Naive thymus-derived CD4-positive, alpha-beta T cell (primary cell): ENCODE measurements at regions of chr14 and their contacts with region 1.

Region 1: GRCh38 chr14:105490572-105491366 is at the start of gene TEDC1:
- DNase-seq: peak; percentile 96 to 100 (median 100)
- ATAC-seq: peak; percentile 75
- H3K4me3 ChIP-seq: peak within 1 kb of the TSS; percentile 85
- H3K4me3 Mint-ChIP-seq: peak within 1 kb of the TSS; percentile 79 to 95 (median 86)
- H3K27ac ChIP-seq: peak within 1 kb of the TSS; percentile 100
- H3K27ac Mint-ChIP-seq: peak within 1 kb of the TSS; percentile 84 to 99 (median 96)
- H3K4me1 ChIP-seq: peaks cover 16 to 24% of the 10 kb centered on the region in 2 donors
- H3K4me1 Mint-ChIP-seq: peaks cover 5 to 24% (median 19%) of the 10 kb centered on the region in 7 donors
- H3K27me3 ChIP-seq: no peaks in the 10 kb centered on the region
- H3K27me3 Mint-ChIP-seq: no peaks in the 10 kb centered on the region
- total RNA-seq, gene TEDC1: 19.7 to 294 (median 31.3) TPM

Region 2: DNA sequence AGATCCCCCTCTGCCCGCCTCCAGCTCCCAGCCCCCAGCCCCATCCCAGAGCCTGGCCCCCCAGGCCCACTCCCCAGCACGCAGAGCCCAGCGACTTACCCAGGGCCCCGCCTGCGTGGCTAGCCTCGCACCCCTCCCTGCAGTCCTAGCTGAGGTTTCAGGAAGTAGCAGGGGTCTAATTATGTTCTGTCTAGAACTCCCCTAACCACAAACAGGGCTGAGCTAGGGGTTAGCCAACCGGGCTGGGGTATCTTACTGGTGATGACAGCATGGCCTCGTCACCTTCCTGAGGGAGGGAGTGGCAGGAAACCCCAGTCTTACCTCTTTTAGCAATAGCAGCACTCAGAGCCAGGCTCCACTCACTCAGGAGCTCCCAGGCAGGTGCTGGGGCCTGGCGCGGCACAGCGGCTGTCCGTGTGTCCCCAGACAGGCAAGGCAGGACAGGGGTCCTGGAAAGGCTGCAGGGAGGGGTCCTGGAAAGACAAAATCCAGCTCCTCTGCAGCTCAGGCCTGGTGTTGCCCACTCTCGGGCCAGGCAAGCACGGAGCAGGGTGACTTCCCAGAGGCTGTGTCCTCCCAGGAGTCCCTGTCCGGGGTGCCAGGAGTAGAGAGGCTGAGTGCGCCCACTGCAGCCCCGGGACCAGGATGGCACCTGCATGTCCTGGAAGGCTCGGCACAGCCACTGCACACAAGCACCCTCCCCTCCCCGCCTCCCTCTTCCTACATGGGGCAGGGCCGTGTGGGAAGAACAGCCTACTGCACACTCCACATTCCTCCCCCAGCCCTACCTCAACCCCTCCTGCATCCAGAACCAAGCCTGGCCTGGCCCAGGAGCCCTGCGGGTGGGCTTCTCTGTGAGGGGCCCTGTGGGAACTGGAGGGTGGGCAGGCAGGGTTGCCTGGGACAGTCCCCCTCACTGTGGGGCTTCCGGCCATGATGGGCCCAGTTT is 425.2 kb before region 1 on chr14 and contains the start of gene GPR132:
- CTCF ChIA-PET with region 1: no interaction called
- POLR2A ChIA-PET with region 1: interaction called, 3 read pairs
- intact Hi-C with region 1: loop called (anchors 2 kb)
- DNase-seq: peak; percentile 73 to 99 (median 96)
- ATAC-seq: peak; percentile 93
- H3K4me3 ChIP-seq: peak within 1 kb of the TSS; percentile 97
- H3K4me3 Mint-ChIP-seq: peak within 1 kb of the TSS; percentile 82 to 96 (median 90)
- H3K27ac ChIP-seq: peak within 1 kb of the TSS; percentile 96
- H3K27ac Mint-ChIP-seq: peak within 1 kb of the TSS; percentile 93 to 99 (median 98)
- H3K4me1 ChIP-seq: peaks cover 66 to 80% of the 10 kb centered on the region in 2 donors
- H3K4me1 Mint-ChIP-seq: peaks cover 36 to 85% (median 58%) of the 10 kb centered on the region in 7 donors
- H3K27me3 ChIP-seq: no peaks in the 10 kb centered on the region
- H3K27me3 Mint-ChIP-seq: no peaks in the 10 kb centered on the region
- total RNA-seq, gene GPR132: 37.8 to 58.7 (median 45.2) TPM

Region 3: DNA sequence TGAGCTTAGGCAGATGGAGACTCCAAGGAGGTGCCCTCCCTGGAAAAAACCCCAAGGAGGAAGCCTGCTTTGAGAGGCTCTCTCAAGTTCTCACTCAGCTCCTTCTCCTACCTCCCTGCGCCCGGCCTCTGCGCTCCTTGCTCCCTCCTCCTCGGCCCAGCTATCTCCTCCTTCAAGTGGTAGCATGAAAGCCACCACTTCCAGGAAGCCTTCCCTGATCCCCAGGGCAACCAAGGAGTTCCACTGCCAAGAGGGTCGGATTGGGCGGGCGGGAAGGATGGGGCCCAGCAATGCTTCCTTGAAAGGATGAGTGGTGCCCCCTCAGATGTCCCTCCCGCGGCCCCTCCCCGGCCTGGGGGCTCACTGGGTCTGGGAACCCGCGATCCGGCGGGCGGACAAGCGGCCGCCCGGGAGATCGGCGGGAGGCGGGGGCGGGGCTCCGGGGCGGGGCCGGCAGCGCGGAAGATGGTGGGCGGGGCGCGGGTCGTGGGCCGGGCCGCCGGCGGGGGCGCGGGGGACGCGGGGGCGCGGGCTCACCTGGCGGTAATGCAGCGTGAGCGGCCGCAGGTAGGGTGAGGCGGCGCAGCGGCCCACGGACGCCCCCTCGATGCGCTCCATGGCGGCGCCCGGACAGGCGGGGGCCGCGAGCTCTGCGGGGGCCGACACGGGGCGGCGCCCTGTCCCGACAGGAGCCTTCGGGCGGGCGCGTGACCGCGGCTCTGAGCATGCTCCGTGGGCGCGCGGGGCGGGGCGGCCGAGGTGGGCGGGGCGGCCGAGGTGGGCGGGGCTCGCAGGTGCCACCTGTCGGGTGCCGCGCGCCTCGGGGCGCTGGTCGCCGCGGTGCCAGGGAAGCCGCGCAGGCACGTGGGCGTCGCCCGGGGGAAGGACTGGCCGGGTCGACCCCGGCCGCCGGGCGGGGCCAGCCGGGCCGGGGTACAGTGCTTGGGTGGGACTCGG is 309.9 kb before region 1 on chr14 and contains the start of gene NUDT14:
- CTCF ChIA-PET with region 1: no interaction called
- POLR2A ChIA-PET with region 1: no interaction called
- intact Hi-C with region 1: loop called (anchors 1 to 5 kb)
- DNase-seq: peak; percentile 69 to 88 (median 82)
- ATAC-seq: peak; percentile 94
- H3K4me3 ChIP-seq: peak within 1 kb of the TSS; percentile 52
- H3K4me3 Mint-ChIP-seq: peak within 1 kb of the TSS; percentile 68 to 86 (median 77)
- H3K27ac ChIP-seq: peak within 1 kb of the TSS; percentile 53
- H3K27ac Mint-ChIP-seq: peak within 1 kb of the TSS in 7 of 9 donors; percentile 10 to 76 (median 64)
- H3K4me1 ChIP-seq: peaks cover 4 to 12% of the 10 kb centered on the region in 2 donors
- H3K4me1 Mint-ChIP-seq: peaks cover 0 to 23% (median 15%) of the 10 kb centered on the region in 7 donors
- H3K27me3 ChIP-seq: no peaks in the 10 kb centered on the region
- H3K27me3 Mint-ChIP-seq: peaks cover 0 to 4% (median 0%) of the 10 kb centered on the region in 5 donors
- total RNA-seq, gene NUDT14: 17.3 to 29.6 (median 20.6) TPM

Region 4: DNA sequence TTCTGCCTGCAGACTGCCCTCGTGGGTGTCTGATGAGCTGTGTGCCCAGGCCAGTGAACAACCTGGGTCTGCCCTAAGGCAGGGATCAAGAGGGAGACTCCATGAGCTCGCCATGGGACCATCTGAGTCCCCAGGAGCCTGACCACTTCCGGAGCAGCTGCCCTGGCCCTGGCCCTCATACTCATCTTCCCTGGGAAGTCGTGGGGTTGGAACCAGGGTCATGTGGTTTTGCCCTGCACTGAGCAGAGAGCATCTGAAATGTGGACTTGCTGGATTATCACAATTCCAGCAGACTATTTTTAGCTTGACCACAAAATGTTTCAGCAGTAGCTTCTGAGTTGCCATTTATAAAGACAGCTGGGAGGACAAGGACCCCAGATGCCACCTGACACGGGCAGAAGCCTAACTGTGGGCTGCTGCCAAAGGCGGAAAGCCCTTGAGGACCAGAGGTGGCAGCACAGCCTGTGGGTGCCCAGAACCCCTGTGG is 235.7 kb before region 1 on chr14:
- CTCF ChIA-PET with region 1: no interaction called
- POLR2A ChIA-PET with region 1: no interaction called
- intact Hi-C with region 1: no loop called
- DNase-seq: no peak
- ATAC-seq: no peak
- H3K4me3 ChIP-seq: no peak overlapping the region
- H3K4me3 Mint-ChIP-seq: no peak overlapping the region
- H3K27ac ChIP-seq: no peak overlapping the region
- H3K27ac Mint-ChIP-seq: peak overlapping the region in 1 of 9 donors; percentile 37
- H3K4me1 ChIP-seq: no peaks in the 10 kb centered on the region
- H3K4me1 Mint-ChIP-seq: peaks cover 5 to 23% (median 19%) of the 10 kb centered on the region in 7 donors
- H3K27me3 ChIP-seq: no peaks in the 10 kb centered on the region
- H3K27me3 Mint-ChIP-seq: no peaks in the 10 kb centered on the region

Region 5: GRCh38 chr14:105375635-105376057 is 115.1 kb before region 1 on chr14:
- CTCF ChIA-PET with region 1: interaction called, 56 read pairs
- POLR2A ChIA-PET with region 1: interaction called, 19 read pairs
- intact Hi-C with region 1: loop called in 1 of 2 experiments (anchors 1 kb)
- DNase-seq: peak in 1 of 9 donors; percentile 44
- ATAC-seq: peak; percentile 68
- H3K4me3 ChIP-seq: no peak overlapping the region
- H3K4me3 Mint-ChIP-seq: peak overlapping the region in 2 of 10 donors; percentile 2 to 56
- H3K27ac ChIP-seq: no peak overlapping the region
- H3K27ac Mint-ChIP-seq: peak overlapping the region in 7 of 9 donors; percentile 3 to 90 (median 60)
- H3K4me1 ChIP-seq: no peaks in the 10 kb centered on the region
- H3K4me1 Mint-ChIP-seq: peaks cover 10 to 14% (median 12%) of the 10 kb centered on the region in 7 donors
- H3K27me3 ChIP-seq: no peaks in the 10 kb centered on the region
- H3K27me3 Mint-ChIP-seq: no peaks in the 10 kb centered on the region

Region 6: DNA sequence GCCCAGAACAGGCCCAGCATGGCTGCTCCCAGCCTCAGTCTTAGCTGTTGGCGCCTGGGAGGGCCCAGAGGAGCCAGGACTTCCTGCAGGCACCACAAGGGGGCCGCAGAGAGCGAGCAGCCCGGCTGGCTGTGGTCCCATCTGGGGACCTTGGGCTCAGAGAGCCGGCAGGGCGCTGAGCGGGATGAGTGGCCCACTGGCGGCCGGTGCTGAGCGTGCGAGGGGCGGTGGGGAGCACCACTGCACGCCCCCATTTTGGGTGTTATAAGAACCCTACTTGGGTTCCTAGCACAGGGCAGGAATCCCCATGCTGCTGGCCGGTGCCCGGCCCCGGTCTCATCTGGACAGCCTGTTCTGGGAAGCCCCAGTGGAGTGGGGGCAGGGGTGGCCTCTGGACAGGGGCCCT is 42.1 kb before region 1 on chr14:
- CTCF ChIA-PET with region 1: interaction called, 12 read pairs
- POLR2A ChIA-PET with region 1: interaction called, 4 read pairs
- intact Hi-C with region 1: loop called (anchors 1 kb)
- DNase-seq: peak; percentile 45 to 76 (median 63)
- ATAC-seq: peak; percentile 92
- H3K4me3 ChIP-seq: no peak overlapping the region
- H3K4me3 Mint-ChIP-seq: no peak overlapping the region
- H3K27ac ChIP-seq: no peak overlapping the region
- H3K27ac Mint-ChIP-seq: no peak overlapping the region
- H3K4me1 ChIP-seq: no peaks in the 10 kb centered on the region
- H3K4me1 Mint-ChIP-seq: peaks cover 0 to 3% (median 0%) of the 10 kb centered on the region in 7 donors
- H3K27me3 ChIP-seq: no peaks in the 10 kb centered on the region
- H3K27me3 Mint-ChIP-seq: no peaks in the 10 kb centered on the region

Region 7: DNA sequence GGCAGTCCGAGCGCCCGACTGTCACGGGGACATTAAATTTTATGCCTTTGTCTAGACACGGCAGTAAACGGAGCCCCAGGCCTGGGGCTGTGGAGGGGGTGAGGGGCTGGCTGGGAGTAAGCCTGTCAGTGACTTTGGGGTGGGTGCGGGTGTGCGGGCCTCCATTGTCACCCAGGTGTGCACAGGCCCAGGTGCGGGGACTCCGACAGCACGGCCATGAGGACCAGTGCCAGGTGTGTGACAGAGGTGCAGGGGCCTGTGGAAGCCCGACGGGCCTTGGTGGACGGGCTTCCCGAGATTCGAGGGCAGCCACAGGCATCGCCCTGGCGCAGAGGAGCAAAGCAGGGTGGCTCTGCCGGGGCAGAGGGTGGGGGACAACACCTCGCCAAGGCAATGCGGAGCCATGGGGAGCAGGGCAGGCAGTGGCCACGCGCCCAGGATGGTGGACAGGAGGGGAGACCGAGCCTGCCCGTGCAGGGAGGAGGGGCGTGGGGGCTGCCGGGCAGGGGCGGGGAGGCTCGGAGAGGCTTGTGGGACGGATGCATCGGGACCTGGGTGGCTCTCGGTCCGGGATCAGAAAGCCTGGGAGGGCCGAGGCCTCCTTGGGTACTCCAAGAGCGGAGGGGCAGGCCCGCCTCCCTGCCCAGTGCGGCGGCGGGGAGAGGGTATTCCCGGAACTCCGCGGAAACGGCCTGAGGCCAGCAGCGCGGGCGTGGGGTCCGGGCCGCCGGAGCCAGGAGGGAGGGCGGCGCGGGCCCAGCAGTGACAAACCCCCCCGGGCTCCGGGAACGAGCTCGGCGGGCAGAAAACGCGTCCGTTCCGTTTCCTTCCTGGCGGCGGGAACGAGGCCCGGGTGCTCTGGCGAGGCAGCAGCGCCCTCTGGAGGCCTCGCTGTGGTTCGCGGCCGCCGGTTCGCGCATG is 37.2 kb after region 1 on chr14:
- CTCF ChIA-PET with region 1: no interaction called
- POLR2A ChIA-PET with region 1: no interaction called
- intact Hi-C with region 1: loop called (anchors 1 to 2 kb)
- DNase-seq: peak; percentile 65 to 86 (median 78)
- ATAC-seq: peak; percentile 89
- H3K4me3 ChIP-seq: peak overlapping the region; percentile 54
- H3K4me3 Mint-ChIP-seq: peak overlapping the region; percentile 42 to 89 (median 72)
- H3K27ac ChIP-seq: no peak overlapping the region
- H3K27ac Mint-ChIP-seq: peak overlapping the region in 2 of 9 donors; percentile 32 to 49
- H3K4me1 ChIP-seq: peaks cover 9 to 14% of the 10 kb centered on the region in 2 donors
- H3K4me1 Mint-ChIP-seq: peaks cover 0 to 24% (median 16%) of the 10 kb centered on the region in 7 donors
- H3K27me3 ChIP-seq: peaks cover 0 to 4% of the 10 kb centered on the region in 2 donors
- H3K27me3 Mint-ChIP-seq: peaks cover 0 to 43% (median 0%) of the 10 kb centered on the region in 5 donors

Region 8: DNA sequence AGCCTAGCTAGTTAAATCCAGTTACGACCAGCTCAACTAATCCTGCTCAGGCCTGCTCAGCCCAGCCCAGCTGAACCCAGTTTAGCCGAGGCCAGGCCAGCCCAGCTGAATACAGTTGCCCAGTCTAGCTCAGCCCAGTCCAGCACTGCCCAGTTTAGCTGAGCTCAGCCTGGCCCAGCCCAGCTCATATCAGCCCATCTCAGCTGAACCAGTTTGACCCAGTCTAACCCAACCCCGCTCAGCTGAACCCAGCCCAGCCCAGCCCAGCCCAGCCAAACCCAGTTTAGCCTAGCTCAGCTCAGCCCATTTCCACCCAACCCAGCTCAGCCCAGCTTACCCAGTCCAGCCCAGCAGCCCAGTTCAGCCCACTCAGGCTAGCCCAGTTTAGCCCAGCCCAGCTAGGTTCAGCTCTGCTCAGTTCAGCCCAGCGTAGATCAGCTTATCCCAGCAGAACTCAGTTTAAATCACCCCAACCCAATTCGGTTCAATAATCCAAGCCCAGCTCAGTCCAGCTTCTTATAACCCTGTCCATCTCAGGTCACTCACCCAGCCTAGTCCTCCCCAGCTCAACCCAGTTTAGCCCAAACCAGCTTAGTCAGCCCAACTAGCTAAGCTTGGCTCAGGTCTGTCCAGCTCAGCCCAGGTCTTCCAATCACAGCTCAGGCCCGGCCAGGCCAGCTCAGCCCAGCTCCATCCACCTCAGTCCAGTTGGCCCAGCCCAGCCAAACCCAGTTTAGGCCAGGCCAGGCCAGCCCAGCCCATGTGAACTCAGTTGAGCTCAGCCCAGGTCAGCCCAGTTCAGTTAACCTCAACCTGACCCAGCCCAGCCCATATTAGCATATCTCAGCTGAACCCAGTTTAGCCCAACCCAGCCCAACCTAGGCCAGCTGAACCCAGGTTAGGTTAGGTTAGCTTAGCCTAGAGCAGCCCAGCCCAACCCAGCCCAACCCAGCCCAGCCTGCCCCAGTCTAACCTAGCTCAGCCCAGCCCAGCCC is 112.3 kb after region 1 on chr14:
- CTCF ChIA-PET with region 1: no interaction called
- POLR2A ChIA-PET with region 1: no interaction called
- intact Hi-C with region 1: no loop called
- DNase-seq: no peak
- ATAC-seq: no peak
- H3K4me3 ChIP-seq: no peak overlapping the region
- H3K4me3 Mint-ChIP-seq: no peak overlapping the region
- H3K27ac ChIP-seq: no peak overlapping the region
- H3K27ac Mint-ChIP-seq: peak overlapping the region in 1 of 9 donors; percentile 60
- H3K4me1 ChIP-seq: no peaks in the 10 kb centered on the region
- H3K4me1 Mint-ChIP-seq: no peaks in the 10 kb centered on the region
- H3K27me3 ChIP-seq: no peaks in the 10 kb centered on the region
- H3K27me3 Mint-ChIP-seq: no peaks in the 10 kb centered on the region